ENCODE measurements at regions of chr9 and their contacts with region 1.

Region 1: GRCh38 chr9:115013998-115014397 is 83.6 kb upstream of the TNFSF8 start:
- DNase-seq: no peak
- H3K4me3 ChIP-seq: no peak overlapping the region
- H3K27ac ChIP-seq: no peak overlapping the region
- H3K4me1 ChIP-seq: peaks cover 0 to 52% (median 48%) of the 10 kb centered on the region in 4 donors
- H3K27me3 ChIP-seq: no peaks in the 10 kb centered on the region
- CTCF ChIP-seq: peak; percentile 81 to 84 (median 81)
- EP300 ChIP-seq: no peak
- POLR2A ChIP-seq: no peak

Region 2: DNA sequence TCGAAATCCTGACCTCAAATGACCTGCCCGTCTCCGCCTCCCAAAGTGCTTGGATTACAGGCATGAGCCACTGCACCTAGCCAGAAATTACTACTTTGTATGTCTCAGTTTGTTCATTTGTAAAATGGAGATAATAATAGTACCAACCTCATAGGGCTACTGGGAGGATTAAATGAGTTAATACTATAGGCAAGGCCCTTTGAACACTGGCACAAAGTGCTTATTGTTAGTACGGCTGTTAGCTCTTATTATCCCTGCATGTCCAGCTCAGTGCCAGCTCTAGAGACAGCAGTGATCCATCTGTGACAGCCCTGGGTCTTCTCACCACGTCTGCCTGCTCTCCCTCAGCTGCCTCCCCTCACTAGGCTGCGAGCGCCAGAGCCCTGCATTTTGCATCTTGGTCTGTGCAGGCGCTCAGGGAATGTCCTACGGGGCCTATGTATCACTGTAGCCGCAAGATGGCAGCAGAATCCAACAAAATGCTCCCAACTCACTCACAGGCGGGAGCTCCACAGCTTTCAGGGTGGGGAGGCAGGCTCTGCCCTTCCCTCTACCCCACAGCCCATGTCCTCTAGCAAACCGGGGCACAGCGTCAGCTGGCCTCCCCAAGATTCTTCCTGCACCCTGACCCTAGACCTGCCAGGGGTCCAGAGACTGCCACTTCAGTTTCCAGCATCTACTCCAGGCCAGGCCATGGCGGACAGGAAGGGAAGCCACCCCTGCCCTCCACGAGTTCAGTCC is 608.5 kb before region 1 on chr9:
- intact Hi-C with region 1: loop called (anchors 10 kb)
- DNase-seq: no peak
- H3K4me3 ChIP-seq: no peak overlapping the region
- H3K27ac ChIP-seq: no peak overlapping the region
- H3K4me1 ChIP-seq: peaks cover 0 to 6% (median 0%) of the 10 kb centered on the region in 4 donors
- H3K27me3 ChIP-seq: no peaks in the 10 kb centered on the region
- CTCF ChIP-seq: peak; percentile 70 to 85 (median 74)
- EP300 ChIP-seq: no peak
- POLR2A ChIP-seq: no peak

Region 3: DNA sequence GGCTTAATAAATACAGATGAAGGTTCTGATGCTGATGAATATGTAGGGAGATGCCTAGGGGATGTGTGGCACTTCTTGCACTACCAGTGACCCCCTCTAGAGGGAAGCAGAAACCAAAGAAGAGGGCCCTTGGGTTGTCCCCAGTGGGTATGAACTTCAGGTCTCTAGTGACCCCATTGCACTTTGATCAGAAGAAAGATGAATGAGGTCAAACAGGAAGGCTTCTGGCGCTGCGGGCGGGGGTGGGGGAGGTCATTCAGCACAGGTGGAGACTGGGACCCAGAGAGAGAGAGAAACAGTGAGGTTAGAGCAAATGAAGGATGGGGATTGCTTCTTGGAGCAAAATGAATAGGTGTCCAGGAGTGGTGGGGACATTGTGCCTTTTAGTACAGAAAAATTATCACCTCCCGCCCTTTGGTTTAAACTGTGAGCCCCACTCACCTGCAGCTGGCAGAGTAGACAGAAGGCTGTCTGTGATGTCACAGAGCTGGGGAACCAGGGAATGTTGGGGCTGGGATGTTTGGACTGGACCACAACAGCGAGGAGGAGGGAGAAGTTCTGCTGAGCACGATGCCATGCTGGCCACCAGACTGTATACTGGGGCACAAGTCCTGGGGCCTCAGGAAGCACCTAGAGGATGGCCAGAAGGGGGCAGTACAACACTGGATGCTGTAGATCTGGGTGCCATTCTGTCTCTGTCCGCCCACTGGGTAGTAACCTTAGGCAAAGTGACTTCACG is 332.2 kb before region 1 on chr9 and contains the start of gene TEX48:
- intact Hi-C with region 1: loop called (anchors 5 kb)
- DNase-seq: no peak
- H3K4me3 ChIP-seq: no peak within 1 kb of the TSS
- H3K27ac ChIP-seq: no peak within 1 kb of the TSS
- H3K4me1 ChIP-seq: peaks cover 0 to 15% (median 7%) of the 10 kb centered on the region in 4 donors
- H3K27me3 ChIP-seq: no peaks in the 10 kb centered on the region
- CTCF ChIP-seq: peak; percentile 34 to 62 (median 47)
- EP300 ChIP-seq: no peak
- POLR2A ChIP-seq: no peak
- total RNA-seq, gene TEX48: not detected

Region 4: GRCh38 chr9:114894801-114895433 is 119.1 kb before region 1 on chr9:
- intact Hi-C with region 1: no loop called
- DNase-seq: peak; percentile 89
- H3K4me3 ChIP-seq: no peak overlapping the region
- H3K27ac ChIP-seq: peak overlapping the region in 3 of 4 donors; percentile 32 to 45 (median 40)
- H3K4me1 ChIP-seq: peaks cover 0 to 21% (median 18%) of the 10 kb centered on the region in 4 donors
- H3K27me3 ChIP-seq: no peaks in the 10 kb centered on the region
- CTCF ChIP-seq: no peak
- EP300 ChIP-seq: no peak
- POLR2A ChIP-seq: no peak

Region 5: GRCh38 chr9:114906908-114907571 is 107.0 kb before region 1 on chr9:
- intact Hi-C with region 1: loop called (anchors 5 kb)
- DNase-seq: no peak
- H3K4me3 ChIP-seq: no peak overlapping the region
- H3K27ac ChIP-seq: no peak overlapping the region
- H3K4me1 ChIP-seq: no peaks in the 10 kb centered on the region
- H3K27me3 ChIP-seq: no peaks in the 10 kb centered on the region
- CTCF ChIP-seq: peak; percentile 15 to 45 (median 21)
- EP300 ChIP-seq: no peak
- POLR2A ChIP-seq: no peak

Region 6: GRCh38 chr9:115035841-115036612 is 22.0 kb after region 1 on chr9:
- intact Hi-C with region 1: no loop called
- DNase-seq: no peak
- H3K4me3 ChIP-seq: no peak overlapping the region
- H3K27ac ChIP-seq: peak overlapping the region; percentile 64 to 80 (median 70)
- H3K4me1 ChIP-seq: peaks cover 13 to 79% (median 46%) of the 10 kb centered on the region in 4 donors
- H3K27me3 ChIP-seq: no peaks in the 10 kb centered on the region
- CTCF ChIP-seq: no peak
- EP300 ChIP-seq: no peak
- POLR2A ChIP-seq: no peak

Region 7: DNA sequence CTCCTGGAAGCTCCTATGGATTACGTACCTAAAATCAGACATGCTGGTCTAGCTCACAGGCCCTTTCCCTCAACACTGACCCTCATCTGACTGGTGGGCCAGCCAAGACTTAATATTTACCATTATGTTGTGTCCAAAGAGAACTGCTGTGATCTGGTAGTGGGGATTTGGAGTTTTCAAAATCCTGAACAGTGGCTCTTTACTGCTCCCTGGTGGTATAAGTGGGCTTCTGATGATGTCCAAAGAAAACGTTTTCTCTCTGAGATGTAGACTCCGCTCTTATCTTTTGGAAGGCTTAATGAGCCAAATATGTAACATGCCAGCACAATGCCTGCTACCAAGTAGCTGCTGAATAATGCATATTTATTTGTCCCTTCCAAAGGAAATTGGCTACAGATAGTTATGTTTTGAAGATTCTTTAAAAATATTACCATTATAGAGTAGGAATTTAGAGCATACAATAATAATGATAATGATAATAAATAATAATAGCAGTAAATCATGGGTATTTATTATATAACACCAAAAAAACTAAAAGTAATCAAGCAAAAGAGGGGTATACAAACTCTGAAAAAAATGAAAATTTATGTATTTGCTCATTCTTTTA is 510.6 kb after region 1 on chr9:
- intact Hi-C with region 1: loop called (anchors 5 kb)
- DNase-seq: no peak
- H3K4me3 ChIP-seq: no peak overlapping the region
- H3K27ac ChIP-seq: no peak overlapping the region
- H3K4me1 ChIP-seq: peaks cover 0 to 28% (median 16%) of the 10 kb centered on the region in 4 donors
- H3K27me3 ChIP-seq: no peaks in the 10 kb centered on the region
- CTCF ChIP-seq: peak; percentile 74 to 81 (median 77)
- EP300 ChIP-seq: no peak
- POLR2A ChIP-seq: no peak